ENCODE measurements at regions of chr2 and their contacts with region 1.

Region 1: DNA sequence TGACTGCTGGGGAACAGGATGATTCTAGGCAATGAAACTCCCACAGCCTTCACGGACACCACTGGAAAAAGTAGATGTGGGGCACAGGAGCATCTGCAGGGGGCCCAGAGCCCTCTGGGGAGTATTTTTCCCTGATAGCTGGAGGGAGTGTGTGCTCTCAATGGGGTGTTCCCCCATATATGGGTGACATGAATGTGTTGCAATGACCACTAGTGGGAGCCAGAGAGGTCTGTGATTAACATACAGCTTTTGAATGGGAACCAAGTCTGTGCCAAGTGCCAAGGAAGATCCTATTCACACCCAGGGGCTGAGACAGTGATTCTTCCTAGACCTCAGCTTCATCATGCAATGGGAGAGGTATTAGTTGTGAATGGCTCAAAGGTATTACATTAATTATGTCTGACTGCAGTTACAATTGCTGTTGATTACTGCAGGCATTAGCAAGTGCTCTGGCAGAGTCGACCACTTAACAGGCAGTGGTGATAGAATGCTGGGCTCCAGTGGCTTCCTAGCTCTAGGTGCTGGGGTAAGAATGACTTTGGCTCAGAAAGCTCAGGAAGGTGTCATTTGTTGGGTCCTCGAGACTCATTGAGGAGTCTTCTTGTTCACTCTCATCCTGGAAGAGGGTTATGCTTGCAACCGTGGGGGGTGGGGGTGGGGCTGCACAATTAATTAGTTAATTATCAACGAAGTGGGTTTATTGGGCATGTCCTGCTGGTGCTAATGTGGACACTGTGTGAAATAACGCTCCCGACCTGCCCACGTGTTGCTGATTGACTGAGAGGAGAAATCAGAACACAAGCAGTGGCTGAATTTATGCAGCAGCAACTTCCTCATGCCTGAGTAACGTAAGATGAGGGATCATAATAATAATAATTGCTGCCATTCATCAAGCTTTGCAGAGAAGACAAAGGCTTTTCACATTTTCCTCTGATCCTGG is 194.1 kb downstream of the CLIP4 start:
- DNase-seq: no peak
- H3K4me3 ChIP-seq: no peak overlapping the region
- H3K27ac ChIP-seq: no peak overlapping the region
- H3K4me1 ChIP-seq: peaks cover 0 to 5% (median 0%) of the 10 kb centered on the region in 4 donors
- H3K27me3 ChIP-seq: no peaks in the 10 kb centered on the region
- CTCF ChIP-seq: peak in 3 of 4 experiments; percentile 41 to 65 (median 49)
- EP300 ChIP-seq: no peak
- POLR2A ChIP-seq: no peak

Region 2: DNA sequence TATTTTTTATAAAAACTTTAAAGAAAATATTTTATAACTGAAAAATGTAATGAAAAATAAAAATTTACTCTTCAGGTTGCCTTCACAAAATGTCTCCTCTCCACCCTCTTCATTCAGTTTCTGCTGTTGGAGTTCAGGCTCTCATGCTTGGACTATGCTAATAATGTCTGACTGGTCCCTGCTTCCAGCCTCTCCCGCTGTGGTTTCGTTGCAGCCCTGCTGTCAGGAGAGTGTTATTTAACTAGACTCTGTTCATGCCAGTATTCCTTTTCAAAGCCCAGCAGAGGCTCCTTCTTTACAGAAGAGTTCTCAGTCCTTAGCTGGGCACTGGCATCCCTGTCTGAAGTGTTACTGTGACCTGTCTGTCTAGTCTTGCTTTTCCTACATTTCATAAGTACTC is 153.8 kb before region 1 on chr2:
- intact Hi-C with region 1: no loop called
- DNase-seq: no peak
- H3K4me3 ChIP-seq: no peak overlapping the region
- H3K27ac ChIP-seq: no peak overlapping the region
- H3K4me1 ChIP-seq: peaks cover 0 to 9% (median 0%) of the 10 kb centered on the region in 4 donors
- H3K27me3 ChIP-seq: no peaks in the 10 kb centered on the region
- CTCF ChIP-seq: no peak
- EP300 ChIP-seq: no peak
- POLR2A ChIP-seq: no peak

Region 3: DNA sequence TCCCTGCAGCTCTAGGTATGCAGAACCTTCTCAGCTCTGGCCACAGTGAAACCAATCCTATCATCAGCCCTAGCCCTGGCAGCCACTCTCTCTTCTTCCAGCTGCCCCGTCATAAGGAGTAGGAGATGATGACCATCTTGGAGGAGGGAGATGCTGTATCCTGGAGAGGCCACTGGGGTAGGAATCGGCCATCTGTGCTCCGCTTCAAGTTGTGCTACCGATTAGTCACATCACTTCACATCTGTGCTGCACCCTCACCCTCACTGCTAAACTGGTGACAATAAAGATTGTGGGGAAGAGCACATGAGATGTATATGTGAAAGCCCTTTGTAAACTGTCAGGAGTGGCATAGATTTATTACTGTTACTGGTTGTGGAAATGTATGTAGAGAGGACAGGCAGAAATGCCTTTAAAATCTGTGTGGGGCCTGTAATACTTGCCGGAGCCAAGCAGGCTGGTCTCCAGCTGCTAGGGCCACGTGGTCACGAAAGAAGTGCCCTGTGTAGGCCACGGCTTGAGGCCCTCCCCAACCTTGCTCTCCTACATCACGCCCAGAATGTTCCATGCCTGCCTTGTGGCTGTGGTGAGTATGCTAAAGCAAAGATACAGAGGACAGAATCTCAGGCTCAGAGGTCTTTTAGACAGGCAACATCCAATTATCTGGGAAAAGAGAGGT is 42.7 kb after region 1 on chr2:
- intact Hi-C with region 1: no loop called
- DNase-seq: no peak
- H3K4me3 ChIP-seq: no peak overlapping the region
- H3K27ac ChIP-seq: no peak overlapping the region
- H3K4me1 ChIP-seq: no peaks in the 10 kb centered on the region
- H3K27me3 ChIP-seq: no peaks in the 10 kb centered on the region
- CTCF ChIP-seq: no peak
- EP300 ChIP-seq: no peak
- POLR2A ChIP-seq: no peak

Region 4: DNA sequence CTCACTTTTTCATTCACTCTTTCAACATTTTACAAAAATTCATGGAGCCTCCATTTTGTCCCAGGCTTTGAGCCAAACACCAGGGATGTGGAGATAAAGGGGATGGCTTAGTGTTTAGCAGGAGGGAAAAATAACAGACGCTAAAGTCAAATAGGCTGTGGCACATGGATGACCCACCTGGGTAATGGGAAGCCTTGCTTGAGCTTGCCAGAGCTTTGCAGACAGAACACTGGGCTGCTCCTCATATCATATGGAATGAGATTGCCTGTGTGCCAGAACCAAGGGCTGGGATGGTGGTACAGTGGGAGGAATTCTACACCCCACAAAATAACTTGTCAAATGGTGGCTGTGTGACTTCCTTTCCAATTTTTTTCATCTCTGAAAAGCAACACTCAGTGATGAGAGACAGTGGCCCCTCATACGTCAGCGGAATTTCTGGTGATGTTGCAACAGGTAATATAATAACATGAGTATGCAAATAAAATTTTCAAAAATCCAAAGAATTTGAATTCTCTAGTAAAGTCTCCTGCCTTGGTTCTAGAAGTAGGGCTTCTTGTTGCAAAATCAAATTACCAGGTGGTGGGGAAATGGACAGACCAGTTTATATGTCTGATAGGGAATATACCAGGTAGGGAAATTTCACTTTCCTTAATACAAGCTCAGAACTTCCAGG is 58.8 kb after region 1 on chr2:
- intact Hi-C with region 1: no loop called
- DNase-seq: no peak
- H3K4me3 ChIP-seq: no peak overlapping the region
- H3K27ac ChIP-seq: no peak overlapping the region
- H3K4me1 ChIP-seq: no peaks in the 10 kb centered on the region
- H3K27me3 ChIP-seq: no peaks in the 10 kb centered on the region
- CTCF ChIP-seq: no peak
- EP300 ChIP-seq: no peak
- POLR2A ChIP-seq: no peak

Region 5: GRCh38 chr2:29841386-29842004 is 532.1 kb after region 1 on chr2:
- intact Hi-C with region 1: loop called (anchors 2 kb)
- DNase-seq: no peak
- H3K4me3 ChIP-seq: no peak overlapping the region
- H3K27ac ChIP-seq: no peak overlapping the region
- H3K4me1 ChIP-seq: no peaks in the 10 kb centered on the region
- H3K27me3 ChIP-seq: no peaks in the 10 kb centered on the region
- CTCF ChIP-seq: peak; percentile 21 to 92 (median 76)
- EP300 ChIP-seq: no peak
- POLR2A ChIP-seq: no peak

Region 6: DNA sequence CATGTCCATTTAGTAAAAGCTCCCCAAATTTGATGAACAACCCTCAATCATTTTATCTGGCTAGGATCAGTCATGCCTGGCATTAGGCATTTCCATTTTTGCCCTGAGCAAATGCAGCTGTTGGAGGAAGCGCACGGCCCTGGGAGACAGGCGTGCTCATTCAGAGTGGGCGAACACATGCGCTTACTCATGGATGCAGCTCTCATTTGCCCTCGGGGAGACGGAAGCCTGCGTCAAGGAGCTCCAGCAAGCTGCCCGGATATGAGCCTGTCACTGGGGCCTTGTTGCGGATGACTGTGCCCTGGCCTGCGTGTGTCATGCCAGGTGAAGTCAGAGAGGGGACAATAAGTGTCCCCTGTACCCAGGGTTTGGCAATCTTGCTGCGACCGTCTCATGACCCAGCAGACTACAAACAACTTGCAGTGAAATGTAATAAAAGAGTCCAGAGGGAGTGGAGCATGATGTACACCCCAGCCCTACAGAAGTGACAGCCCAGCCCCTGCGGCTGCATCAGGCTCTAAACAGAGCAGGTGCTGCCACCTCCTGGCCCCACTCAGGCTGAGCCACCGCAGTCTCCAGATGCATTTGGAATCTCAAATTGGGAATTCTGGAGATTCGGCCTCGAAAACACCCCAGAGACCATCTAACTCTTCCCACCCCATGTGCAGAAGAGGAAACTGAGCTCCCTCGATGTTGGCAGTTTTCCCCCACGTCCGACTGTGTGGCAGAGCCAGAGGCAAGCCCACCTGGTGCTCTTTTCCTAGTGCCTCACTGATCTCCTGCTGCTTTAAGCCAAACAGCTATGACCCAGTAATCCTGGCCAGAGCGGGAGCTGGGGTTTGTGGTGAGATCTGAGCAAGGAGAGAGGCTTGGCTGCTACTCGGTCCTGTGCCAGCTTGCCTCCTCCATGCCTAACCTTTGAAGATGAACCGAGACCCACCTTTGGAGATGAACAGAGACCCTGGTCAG is 717.0 kb after region 1 on chr2:
- intact Hi-C with region 1: no loop called
- DNase-seq: no peak
- H3K4me3 ChIP-seq: no peak overlapping the region
- H3K27ac ChIP-seq: no peak overlapping the region
- H3K4me1 ChIP-seq: no peaks in the 10 kb centered on the region
- H3K27me3 ChIP-seq: peaks cover 0 to 12% (median 3%) of the 10 kb centered on the region in 3 donors
- CTCF ChIP-seq: peak in 3 of 4 experiments; percentile 25 to 50 (median 34)
- EP300 ChIP-seq: no peak
- POLR2A ChIP-seq: no peak